ENCODE measurements at regions of chr9 and their contacts with region 1.

Region 1: DNA sequence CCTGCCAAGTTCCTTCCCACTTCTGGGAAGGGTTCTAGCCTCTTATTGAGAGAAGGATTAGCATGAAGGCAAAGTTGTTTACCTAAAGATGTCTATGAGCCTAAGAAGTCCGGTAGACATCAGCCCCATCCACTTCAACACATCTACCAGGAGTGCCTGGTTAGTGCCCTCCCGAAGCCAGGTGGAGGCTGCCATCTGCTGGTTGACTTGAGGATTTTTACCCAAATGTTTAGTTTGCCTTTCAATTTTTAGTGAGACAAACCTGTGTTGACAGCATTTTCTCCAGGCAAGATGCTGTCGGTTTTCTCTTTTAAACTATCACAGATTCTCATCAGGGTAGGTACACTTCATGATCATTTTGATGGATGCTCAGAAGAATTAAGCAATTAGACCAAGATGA is 83.6 kb upstream of the TNFSF8 start:
- DNase-seq: peak; percentile 74
- ATAC-seq: peak; percentile 66
- H3K4me3 ChIP-seq: no peak overlapping the region
- H3K27ac ChIP-seq: no peak overlapping the region
- H3K4me1 ChIP-seq: peaks cover 16% of the 10 kb centered on the region
- H3K27me3 ChIP-seq: no peaks in the 10 kb centered on the region
- CTCF ChIP-seq: peak; percentile 78

Region 2: DNA sequence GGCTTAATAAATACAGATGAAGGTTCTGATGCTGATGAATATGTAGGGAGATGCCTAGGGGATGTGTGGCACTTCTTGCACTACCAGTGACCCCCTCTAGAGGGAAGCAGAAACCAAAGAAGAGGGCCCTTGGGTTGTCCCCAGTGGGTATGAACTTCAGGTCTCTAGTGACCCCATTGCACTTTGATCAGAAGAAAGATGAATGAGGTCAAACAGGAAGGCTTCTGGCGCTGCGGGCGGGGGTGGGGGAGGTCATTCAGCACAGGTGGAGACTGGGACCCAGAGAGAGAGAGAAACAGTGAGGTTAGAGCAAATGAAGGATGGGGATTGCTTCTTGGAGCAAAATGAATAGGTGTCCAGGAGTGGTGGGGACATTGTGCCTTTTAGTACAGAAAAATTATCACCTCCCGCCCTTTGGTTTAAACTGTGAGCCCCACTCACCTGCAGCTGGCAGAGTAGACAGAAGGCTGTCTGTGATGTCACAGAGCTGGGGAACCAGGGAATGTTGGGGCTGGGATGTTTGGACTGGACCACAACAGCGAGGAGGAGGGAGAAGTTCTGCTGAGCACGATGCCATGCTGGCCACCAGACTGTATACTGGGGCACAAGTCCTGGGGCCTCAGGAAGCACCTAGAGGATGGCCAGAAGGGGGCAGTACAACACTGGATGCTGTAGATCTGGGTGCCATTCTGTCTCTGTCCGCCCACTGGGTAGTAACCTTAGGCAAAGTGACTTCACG is 332.2 kb before region 1 on chr9 and contains the start of gene TEX48:
- CTCF ChIA-PET with region 1: no interaction called
- POLR2A ChIA-PET with region 1: no interaction called
- intact Hi-C with region 1: loop called (anchors 1 kb)
- DNase-seq: peak; percentile 82
- ATAC-seq: peak; percentile 75
- H3K4me3 ChIP-seq: no peak within 1 kb of the TSS
- H3K27ac ChIP-seq: peak within 1 kb of the TSS; percentile 71
- H3K4me1 ChIP-seq: peaks cover 40% of the 10 kb centered on the region
- H3K27me3 ChIP-seq: no peaks in the 10 kb centered on the region
- CTCF ChIP-seq: peak; percentile 65
- total RNA-seq, gene TEX48: 2.4 TPM in 1 of 2 replicates, not detected in the other

Region 3: DNA sequence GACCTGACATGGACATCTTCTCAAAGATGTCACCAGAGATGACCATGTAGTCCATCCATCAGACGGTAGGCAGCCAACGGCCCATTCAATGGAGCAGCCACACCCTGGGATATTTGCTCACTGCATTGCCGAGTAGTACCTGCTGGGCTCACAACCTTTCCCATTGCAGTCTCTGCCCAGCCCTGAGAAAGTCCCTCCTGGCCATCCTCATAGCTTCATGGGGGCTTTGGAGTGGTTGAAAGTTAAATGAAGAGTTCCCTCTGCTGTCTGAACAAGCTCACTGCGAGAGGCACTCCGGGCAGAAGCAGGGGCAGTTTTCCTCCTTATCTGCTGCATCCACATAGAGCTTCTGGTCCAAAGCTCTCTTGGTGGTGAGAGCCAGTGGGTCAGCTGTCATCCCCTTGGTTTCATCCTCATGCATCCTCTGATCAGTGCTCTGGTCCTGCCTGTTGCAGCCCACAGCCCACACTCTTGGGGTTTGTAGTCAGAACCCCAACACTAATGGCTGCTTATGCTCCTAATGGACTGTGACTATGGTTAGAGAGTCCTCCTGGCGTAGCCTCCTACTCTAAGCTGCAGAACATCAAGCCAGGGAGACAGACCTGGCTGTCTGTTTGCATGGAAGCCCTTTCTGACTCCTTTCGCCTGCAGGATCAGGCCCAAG is 107.0 kb before region 1 on chr9:
- CTCF ChIA-PET with region 1: interaction called, 5 read pairs
- POLR2A ChIA-PET with region 1: no interaction called
- intact Hi-C with region 1: loop called (anchors 1 kb)
- DNase-seq: peak; percentile 58
- ATAC-seq: peak; percentile 16
- H3K4me3 ChIP-seq: no peak overlapping the region
- H3K27ac ChIP-seq: peak overlapping the region; percentile 91
- H3K4me1 ChIP-seq: peaks cover 45% of the 10 kb centered on the region
- H3K27me3 ChIP-seq: no peaks in the 10 kb centered on the region
- CTCF ChIP-seq: peak; percentile 80

Region 4: GRCh38 chr9:115085773-115086377 is 71.9 kb after region 1 on chr9:
- CTCF ChIA-PET with region 1: no interaction called
- POLR2A ChIA-PET with region 1: no interaction called
- intact Hi-C with region 1: no loop called
- DNase-seq: no peak
- ATAC-seq: no peak
- H3K4me3 ChIP-seq: no peak overlapping the region
- H3K27ac ChIP-seq: no peak overlapping the region
- H3K4me1 ChIP-seq: peaks cover 23% of the 10 kb centered on the region
- H3K27me3 ChIP-seq: no peaks in the 10 kb centered on the region
- CTCF ChIP-seq: no peak

Region 5: GRCh38 chr9:115164511-115164974 is 150.5 kb after region 1 on chr9:
- CTCF ChIA-PET with region 1: no interaction called
- POLR2A ChIA-PET with region 1: no interaction called
- intact Hi-C with region 1: loop called (anchors 5 kb)
- DNase-seq: peak; percentile 93
- ATAC-seq: peak; percentile 78
- H3K4me3 ChIP-seq: no peak overlapping the region
- H3K27ac ChIP-seq: peak overlapping the region; percentile 50
- H3K4me1 ChIP-seq: peaks cover 21% of the 10 kb centered on the region
- H3K27me3 ChIP-seq: no peaks in the 10 kb centered on the region
- CTCF ChIP-seq: no peak

Measured in PC-3 (cell line).